ENCODE measurements at regions of chr12 and their contacts with region 1.

Region 1: DNA sequence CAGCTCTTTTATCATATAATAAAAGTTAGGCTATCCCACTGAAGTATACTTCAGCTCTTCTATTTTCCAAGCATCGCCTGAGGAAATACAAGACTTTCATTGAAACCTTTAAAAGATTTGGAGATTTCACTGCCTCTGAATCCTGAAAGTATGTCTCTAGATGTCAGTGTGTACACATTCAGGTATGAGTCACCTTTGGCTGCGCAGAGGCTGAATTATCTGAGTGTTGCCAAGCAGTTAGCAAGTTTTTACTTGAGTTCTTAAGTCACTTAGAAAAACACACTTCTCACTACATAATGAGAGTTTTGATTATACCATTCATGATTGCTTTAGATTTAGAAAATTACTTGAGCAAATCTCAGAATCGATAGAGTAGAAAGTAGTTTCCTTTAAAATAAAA is 210.3 kb downstream of the TMTC2 start:
- DNase-seq: no peak
- ATAC-seq: no peak
- H3K4me3 ChIP-seq: no peak overlapping the region
- H3K27ac ChIP-seq: no peak overlapping the region
- H3K4me1 ChIP-seq: no peaks in the 10 kb centered on the region
- H3K27me3 ChIP-seq: no peaks in the 10 kb centered on the region
- CTCF ChIP-seq: no peak
- EP300 ChIP-seq: no peak
- POLR2A ChIP-seq: no peak
- RAD21 ChIP-seq: no peak

Region 2: GRCh38 chr12:82855872-82856271 is 41.1 kb before region 1 on chr12:
- CTCF ChIA-PET with region 1: no interaction called
- POLR2A ChIA-PET with region 1: no interaction called
- RAD21 ChIA-PET with region 1: no interaction called
- SMC1A ChIA-PET with region 1: no interaction called
- in situ Hi-C with region 1: no loop called
- intact Hi-C with region 1: no loop called
- DNase-seq: no peak
- ATAC-seq: peak; percentile 89
- H3K4me3 ChIP-seq: no peak overlapping the region
- H3K27ac ChIP-seq: no peak overlapping the region
- H3K4me1 ChIP-seq: no peaks in the 10 kb centered on the region
- H3K27me3 ChIP-seq: no peaks in the 10 kb centered on the region
- CTCF ChIP-seq: no peak
- EP300 ChIP-seq: no peak
- POLR2A ChIP-seq: no peak
- RAD21 ChIP-seq: no peak

Region 3: GRCh38 chr12:82883394-82884350 is 13.3 kb before region 1 on chr12:
- CTCF ChIA-PET with region 1: no interaction called
- POLR2A ChIA-PET with region 1: no interaction called
- RAD21 ChIA-PET with region 1: no interaction called
- SMC1A ChIA-PET with region 1: interaction called, 11 read pairs
- in situ Hi-C with region 1: no loop called
- intact Hi-C with region 1: no loop called
- DNase-seq: no peak
- ATAC-seq: no peak
- H3K4me3 ChIP-seq: no peak overlapping the region
- H3K27ac ChIP-seq: no peak overlapping the region
- H3K4me1 ChIP-seq: no peaks in the 10 kb centered on the region
- H3K27me3 ChIP-seq: no peaks in the 10 kb centered on the region
- CTCF ChIP-seq: no peak
- EP300 ChIP-seq: no peak
- POLR2A ChIP-seq: no peak
- RAD21 ChIP-seq: no peak